ENCODE measurements at regions of chr2 and their contacts with region 1.

Region 1: DNA sequence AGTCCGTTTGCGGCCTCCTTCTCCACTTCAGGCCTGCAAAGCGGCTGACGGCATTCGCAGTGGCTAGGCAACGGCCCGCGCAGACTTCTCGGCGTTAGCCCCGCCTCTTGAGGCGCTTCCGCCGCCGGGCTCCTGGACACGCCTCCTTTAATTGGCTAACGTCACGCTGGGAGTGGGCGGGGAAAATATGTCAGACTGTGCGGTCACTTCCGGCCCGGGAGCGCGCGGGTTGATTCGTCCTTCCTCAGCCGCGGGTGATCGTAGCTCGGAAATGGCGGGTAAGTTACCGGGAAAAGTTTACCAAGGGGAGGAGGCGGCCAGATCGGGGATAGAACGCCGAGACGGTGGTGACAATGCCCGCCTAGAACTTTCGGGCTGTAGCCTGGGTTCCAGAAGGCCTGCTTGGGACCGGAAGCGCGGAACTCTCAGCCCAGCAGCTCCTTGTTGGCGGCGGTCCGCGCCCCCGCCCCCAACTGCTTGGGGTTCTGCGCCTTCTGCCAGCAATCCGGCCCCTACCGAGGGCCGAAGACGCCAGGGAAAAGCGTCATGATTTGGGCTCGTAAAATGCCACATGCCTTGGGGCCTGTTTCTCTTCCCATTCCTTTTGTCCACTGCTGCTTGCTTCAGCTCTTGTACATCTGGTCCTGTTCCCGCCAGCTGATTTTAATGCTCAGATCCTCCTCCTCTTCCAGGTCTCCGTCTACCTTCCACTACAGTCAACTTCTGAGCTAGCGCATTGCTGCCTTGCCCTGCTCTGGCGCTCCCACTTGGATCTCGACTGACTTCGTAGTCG is at the start of gene HAT1:
- DNase-seq: peak; percentile 94
- ATAC-seq: peak; percentile 97
- H3K4me3 Mint-ChIP-seq: peak within 1 kb of the TSS; percentile 100
- H3K27ac Mint-ChIP-seq: peak within 1 kb of the TSS; percentile 99
- H3K4me1 Mint-ChIP-seq: peaks cover 33% of the 10 kb centered on the region
- H3K27me3 Mint-ChIP-seq: no peaks in the 10 kb centered on the region
- CTCF ChIP-seq: no peak
- total RNA-seq, gene HAT1: 35.9 and 36.2 TPM in 2 replicates

Region 2: GRCh38 chr2:171433763-171434670 is 488.4 kb before region 1 on chr2 and contains the starts of genes DCAF17 and METTL8:
- CTCF ChIA-PET with region 1: no interaction called
- POLR2A ChIA-PET with region 1: no interaction called
- intact Hi-C with region 1: loop called (anchors 1 kb)
- DNase-seq: peak; percentile 91
- ATAC-seq: peak; percentile 92
- H3K4me3 Mint-ChIP-seq: peak within 1 kb of the TSS; percentile 90
- H3K27ac Mint-ChIP-seq: peak within 1 kb of the TSS; percentile 94
- H3K4me1 Mint-ChIP-seq: peaks cover 24% of the 10 kb centered on the region
- H3K27me3 Mint-ChIP-seq: no peaks in the 10 kb centered on the region
- CTCF ChIP-seq: no peak
- total RNA-seq, gene DCAF17: 23.1 and 23.5 TPM in 2 replicates
- total RNA-seq, gene METTL8: 16.5 and 22.9 TPM in 2 replicates

Region 3: DNA sequence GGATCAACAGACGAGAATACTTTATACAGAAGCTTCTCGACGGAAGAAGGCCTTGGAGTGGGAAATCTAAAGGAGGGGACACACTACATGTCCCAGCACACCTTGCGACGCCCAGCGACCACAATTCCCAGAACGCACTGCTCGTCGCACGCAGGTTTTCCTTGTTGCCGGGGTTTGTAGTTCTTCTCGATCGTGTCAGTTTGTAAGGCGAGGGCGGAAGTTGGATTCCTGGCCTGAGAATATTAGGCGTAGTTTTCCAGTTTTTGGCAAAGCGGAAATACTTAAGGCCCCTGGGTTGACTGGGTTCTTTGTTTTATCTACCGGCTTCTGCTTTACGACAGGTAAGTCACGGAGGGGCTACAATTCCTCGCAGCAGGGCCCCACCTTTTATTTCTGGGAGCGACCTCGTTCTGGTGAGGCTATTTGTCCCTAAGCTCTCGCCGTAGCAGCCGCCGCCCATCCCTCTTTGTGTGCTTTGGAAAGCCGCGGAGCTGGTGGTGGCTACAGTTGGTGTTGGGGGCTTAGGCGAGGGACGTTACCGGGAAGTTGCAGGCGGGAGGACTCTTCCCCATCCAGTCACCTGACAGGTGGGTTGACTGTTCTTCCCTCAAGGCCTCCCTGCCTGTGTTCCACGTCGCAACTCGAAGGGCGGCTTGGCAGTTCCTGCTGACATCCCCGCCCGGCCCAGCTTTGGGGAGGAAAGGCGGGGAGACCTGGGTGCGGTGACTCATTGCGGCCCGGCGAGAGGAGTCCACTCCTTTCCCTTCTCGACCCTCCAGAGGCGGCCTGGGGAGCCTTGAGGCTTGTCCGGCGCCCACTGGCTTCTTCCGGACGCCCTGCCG is 234.9 kb before region 1 on chr2 and contains the start of gene DYNC1I2:
- CTCF ChIA-PET with region 1: no interaction called
- POLR2A ChIA-PET with region 1: interaction called, 7 read pairs
- intact Hi-C with region 1: loop called (anchors 1 kb)
- DNase-seq: peak; percentile 70
- ATAC-seq: peak; percentile 87
- H3K4me3 Mint-ChIP-seq: peak within 1 kb of the TSS; percentile 95
- H3K27ac Mint-ChIP-seq: peak within 1 kb of the TSS; percentile 88
- H3K4me1 Mint-ChIP-seq: peaks cover 17% of the 10 kb centered on the region
- H3K27me3 Mint-ChIP-seq: peaks cover 2% of the 10 kb centered on the region
- CTCF ChIP-seq: no peak
- total RNA-seq, gene DYNC1I2: 52.0 and 54.6 TPM in 2 replicates

Region 4: DNA sequence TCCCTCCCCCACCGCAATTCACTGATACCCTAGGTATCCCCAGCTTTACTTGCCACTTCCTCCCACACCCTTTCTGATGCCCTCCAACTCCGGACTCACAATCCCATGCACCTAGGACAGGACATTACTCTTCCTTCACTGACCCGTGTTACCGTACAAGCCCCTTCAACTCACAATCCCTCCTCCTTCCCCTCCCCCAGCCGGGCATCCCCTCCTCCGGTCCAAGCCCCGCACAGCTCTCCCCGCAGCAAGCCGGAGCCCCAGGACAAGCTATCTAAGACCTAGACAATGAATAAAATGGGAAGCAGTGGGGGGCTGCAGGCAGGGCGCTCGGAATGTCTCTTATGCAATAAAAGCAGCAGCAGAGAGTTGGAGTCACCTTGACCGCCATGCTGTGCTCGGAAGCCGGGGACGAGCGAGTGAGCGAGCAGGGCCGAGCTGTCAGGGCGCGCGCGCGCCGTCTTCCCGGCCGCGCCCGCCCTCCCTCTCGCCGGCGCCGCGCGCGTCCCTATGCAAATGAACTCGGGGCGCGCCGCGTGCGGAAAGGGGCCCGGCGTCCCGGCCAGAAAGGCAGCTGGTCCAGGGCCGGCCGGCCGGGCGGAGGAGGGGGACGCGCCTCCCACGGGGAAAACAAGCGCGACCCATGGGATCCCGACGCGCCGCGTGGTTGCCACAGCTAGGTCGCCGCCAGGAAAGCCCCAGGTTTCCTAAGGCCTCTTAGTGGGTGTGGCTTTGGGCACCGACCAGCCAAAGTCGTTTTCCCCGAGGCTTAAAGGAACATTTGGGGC is 28.4 kb before region 1 on chr2 and contains the start of gene SLC25A12:
- CTCF ChIA-PET with region 1: interaction called, 5 read pairs
- POLR2A ChIA-PET with region 1: interaction called, 23 read pairs
- intact Hi-C with region 1: loop called (anchors 1 kb)
- DNase-seq: peak; percentile 81
- ATAC-seq: peak; percentile 95
- H3K4me3 Mint-ChIP-seq: peak within 1 kb of the TSS; percentile 98
- H3K27ac Mint-ChIP-seq: peak within 1 kb of the TSS; percentile 85
- H3K4me1 Mint-ChIP-seq: peaks cover 23% of the 10 kb centered on the region
- H3K27me3 Mint-ChIP-seq: no peaks in the 10 kb centered on the region
- CTCF ChIP-seq: no peak
- total RNA-seq, gene SLC25A12: 18.8 and 22.2 TPM in 2 replicates

Region 5: GRCh38 chr2:171910494-171910893 is 11.9 kb before region 1 on chr2:
- CTCF ChIA-PET with region 1: no interaction called
- POLR2A ChIA-PET with region 1: no interaction called
- intact Hi-C with region 1: no loop called
- DNase-seq: no peak
- ATAC-seq: no peak
- H3K4me3 Mint-ChIP-seq: no peak overlapping the region
- H3K27ac Mint-ChIP-seq: no peak overlapping the region
- H3K4me1 Mint-ChIP-seq: no peaks in the 10 kb centered on the region
- H3K27me3 Mint-ChIP-seq: no peaks in the 10 kb centered on the region
- CTCF ChIP-seq: no peak

Region 6: GRCh38 chr2:171999604-172000469 is 77.4 kb after region 1 on chr2 and contains the start of gene METAP1D:
- CTCF ChIA-PET with region 1: no interaction called
- POLR2A ChIA-PET with region 1: interaction called, 4 read pairs
- intact Hi-C with region 1: loop called (anchors 1 kb)
- DNase-seq: peak; percentile 86
- ATAC-seq: peak; percentile 96
- H3K4me3 Mint-ChIP-seq: peak within 1 kb of the TSS; percentile 95
- H3K27ac Mint-ChIP-seq: peak within 1 kb of the TSS; percentile 96
- H3K4me1 Mint-ChIP-seq: peaks cover 21% of the 10 kb centered on the region
- H3K27me3 Mint-ChIP-seq: peaks cover 4% of the 10 kb centered on the region
- CTCF ChIP-seq: no peak
- total RNA-seq, gene METAP1D: 7.7 and 13.7 TPM in 2 replicates